ENCODE measurements at regions of chr4 and their contacts with region 1.

Region 1: DNA sequence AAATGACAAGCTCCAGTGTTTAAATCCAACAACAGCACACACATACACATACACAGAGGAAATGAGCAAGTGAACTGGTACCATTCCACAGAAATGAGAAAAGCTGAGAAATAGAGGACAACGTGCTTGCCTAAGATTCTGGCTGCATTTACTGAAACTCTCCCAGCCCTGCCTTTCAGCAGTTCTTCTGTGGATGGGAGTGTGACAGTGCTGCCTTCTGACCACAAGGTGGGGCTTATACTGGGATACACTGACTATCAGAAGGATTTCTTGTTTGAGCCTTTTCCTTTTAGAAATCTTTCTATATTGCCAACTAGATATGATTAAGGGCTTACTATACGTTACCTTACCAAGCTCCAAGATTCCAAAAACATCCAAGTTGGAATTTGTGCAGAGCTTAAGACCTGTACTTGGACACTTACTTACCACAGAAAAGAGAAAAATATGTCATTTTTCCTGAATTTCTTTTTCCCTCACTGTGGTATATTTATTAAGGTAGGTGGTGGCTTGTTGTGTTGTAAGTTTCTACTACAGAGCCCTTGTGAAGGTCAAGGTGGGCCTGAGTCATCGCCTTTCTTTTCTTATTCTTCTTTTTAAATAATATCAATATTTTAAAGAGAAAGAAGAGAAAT is 10.7 kb upstream of the CXCL8 start:
- DNase-seq: peak; percentile 67 to 80 (median 76)
- H3K4me3 ChIP-seq: no peak overlapping the region
- H3K27ac ChIP-seq: no peak overlapping the region
- H3K4me1 ChIP-seq: peaks cover 7 to 42% (median 18%) of the 10 kb centered on the region in 4 experiments
- H3K27me3 ChIP-seq: no peaks in the 10 kb centered on the region

Region 2: DNA sequence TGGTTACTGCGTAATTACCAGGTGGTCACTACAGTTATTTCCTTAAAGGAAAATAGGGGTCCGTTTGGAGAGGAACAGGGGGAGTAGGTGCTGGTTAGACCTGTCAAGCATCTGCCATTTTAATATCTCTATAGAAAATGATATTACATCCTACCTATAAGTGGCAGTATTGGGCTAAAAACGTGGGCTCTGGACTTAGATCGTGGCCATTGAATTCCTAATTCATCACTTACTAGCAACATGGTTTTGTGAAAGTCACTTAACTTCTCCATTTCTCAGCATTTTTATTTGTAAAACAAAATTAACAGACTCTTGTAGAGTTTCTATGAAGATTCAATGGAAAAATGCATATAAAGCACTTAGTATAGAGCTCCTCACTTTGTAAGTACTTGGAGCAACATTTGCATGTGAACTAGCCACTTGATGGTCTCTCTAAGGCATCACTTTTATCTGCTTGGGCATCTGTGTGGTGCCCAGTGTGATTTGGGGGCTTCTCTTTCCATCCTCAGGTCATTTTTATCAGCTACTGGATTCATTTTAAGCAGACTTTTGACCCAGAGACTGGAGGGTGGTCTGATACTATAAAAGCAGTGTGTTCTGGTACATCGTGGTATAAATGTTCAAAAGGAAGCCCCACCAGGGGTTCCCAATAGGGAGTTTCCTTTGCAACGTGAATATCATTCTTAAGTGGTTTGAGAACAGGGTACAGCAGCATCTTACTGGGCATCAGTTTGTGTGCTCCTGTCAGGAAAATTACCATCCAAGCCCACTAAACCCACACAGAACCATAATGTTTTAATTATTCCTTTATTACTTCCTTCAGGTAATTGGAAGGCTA is 66.7 kb before region 1 on chr4:
- CTCF ChIA-PET with region 1: interaction called, 14 read pairs
- POLR2A ChIA-PET with region 1: no interaction called
- DNase-seq: peak; percentile 61 to 81 (median 81)
- H3K4me3 ChIP-seq: no peak overlapping the region
- H3K27ac ChIP-seq: no peak overlapping the region
- H3K4me1 ChIP-seq: peaks cover 5 to 25% (median 12%) of the 10 kb centered on the region in 4 experiments
- H3K27me3 ChIP-seq: no peaks in the 10 kb centered on the region

Region 3: DNA sequence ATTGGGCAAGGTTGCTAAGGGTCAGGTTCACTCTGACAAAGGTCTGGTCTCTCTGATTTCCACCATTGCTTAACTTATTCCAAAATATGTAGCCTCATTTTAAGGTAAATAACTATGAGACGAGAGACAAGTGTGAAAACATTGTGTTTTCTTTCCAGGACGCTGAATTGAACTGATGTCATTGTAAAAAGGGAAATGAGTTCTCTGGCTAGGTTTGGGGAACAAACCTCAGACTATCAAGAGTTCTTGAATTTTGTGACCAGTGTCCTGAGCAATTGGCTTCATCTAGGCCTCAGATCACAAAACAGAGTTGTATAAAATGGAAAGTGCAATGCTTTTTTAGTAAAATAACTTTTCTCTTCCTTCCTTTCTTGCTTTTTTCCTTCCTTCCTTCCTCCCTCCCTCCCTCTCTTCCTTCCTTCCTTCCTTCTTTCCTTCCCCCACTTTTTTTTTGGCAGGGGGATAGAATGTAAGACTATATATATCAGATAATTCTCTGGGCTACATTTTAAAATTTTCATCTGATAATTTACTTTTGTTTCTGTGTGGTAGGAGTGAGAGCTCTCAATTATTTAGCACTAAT is 20.1 kb before region 1 on chr4:
- CTCF ChIA-PET with region 1: interaction called, 17 read pairs
- POLR2A ChIA-PET with region 1: no interaction called
- DNase-seq: peak in 2 of 3 donors; percentile 76 to 87
- H3K4me3 ChIP-seq: no peak overlapping the region
- H3K27ac ChIP-seq: peak overlapping the region in 1 of 2 experiments; percentile 57
- H3K4me1 ChIP-seq: peaks cover 12 to 49% (median 40%) of the 10 kb centered on the region in 4 experiments
- H3K27me3 ChIP-seq: no peaks in the 10 kb centered on the region

Region 4: GRCh38 chr4:73762409-73762808 is 32.8 kb after region 1 on chr4:
- CTCF ChIA-PET with region 1: interaction called, 10 read pairs
- POLR2A ChIA-PET with region 1: no interaction called
- DNase-seq: peak; percentile 34 to 78 (median 64)
- H3K4me3 ChIP-seq: peak overlapping the region in 1 of 7 experiments; percentile 10
- H3K27ac ChIP-seq: no peak overlapping the region
- H3K4me1 ChIP-seq: peaks cover 8 to 12% (median 9%) of the 10 kb centered on the region in 4 experiments
- H3K27me3 ChIP-seq: no peaks in the 10 kb centered on the region

Region 5: DNA sequence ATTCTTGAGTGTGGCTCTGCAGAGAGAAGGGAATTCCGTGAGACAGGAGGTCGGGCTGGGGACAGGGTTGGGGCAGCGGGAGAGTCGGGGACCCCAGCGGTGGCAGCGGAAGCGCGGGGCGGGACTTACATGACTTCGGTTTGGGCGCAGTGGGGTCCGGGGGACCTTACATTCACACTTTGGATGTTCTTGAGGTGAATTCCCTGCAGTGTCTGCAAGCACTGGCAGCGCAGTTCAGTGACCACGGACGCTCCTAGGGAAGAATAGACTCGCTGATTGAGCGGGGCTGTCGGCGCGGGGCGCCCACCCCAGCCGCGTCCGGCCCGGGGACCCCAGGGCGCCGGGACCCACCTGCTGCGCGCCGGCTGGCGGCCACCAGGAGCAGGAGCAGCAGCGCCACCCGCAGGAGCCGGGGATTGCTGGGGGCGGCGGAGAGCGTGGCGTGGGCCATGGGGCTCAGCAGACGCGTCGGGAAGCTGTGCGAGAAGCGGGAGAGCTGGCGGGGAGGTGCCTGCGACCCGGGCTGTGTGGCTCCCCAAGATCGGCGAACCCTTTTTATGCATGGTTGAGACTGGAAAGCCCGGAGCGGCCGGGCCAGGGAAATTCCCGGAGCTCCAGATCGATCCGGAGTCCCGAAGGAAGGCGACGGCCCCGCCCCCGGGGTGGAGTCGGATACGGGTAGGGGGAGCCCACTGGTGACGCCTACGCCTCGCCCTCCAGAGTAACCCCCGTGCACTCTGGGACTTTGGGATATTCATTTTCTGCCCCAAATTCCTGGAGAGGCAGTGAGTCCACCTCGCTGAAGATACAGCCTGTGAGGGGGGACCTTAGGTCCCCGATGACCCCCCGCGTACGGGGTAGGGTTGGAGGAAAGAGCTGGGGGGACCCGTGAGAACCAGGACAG is 308.8 kb after region 1 on chr4 and contains the start of gene CXCL3:
- CTCF ChIA-PET with region 1: interaction called, 13 read pairs
- POLR2A ChIA-PET with region 1: no interaction called
- DNase-seq: peak; percentile 58 to 82 (median 68)
- H3K4me3 ChIP-seq: peak within 1 kb of the TSS; percentile 78 to 96 (median 88)
- H3K27ac ChIP-seq: peak within 1 kb of the TSS; percentile 89 to 93
- H3K4me1 ChIP-seq: peaks cover 19 to 41% (median 28%) of the 10 kb centered on the region in 4 experiments
- H3K27me3 ChIP-seq: no peaks in the 10 kb centered on the region